PC-9 (cell line): ENCODE measurements at regions of chr1 and their contacts with region 1.

Region 1: GRCh38 chr1:61925591-61926359 is 183.5 kb downstream of the PATJ start:
- DNase-seq: no peak
- H3K4me3 ChIP-seq: no peak overlapping the region
- H3K27ac ChIP-seq: no peak overlapping the region
- H3K4me1 ChIP-seq: no peaks in the 10 kb centered on the region
- H3K27me3 ChIP-seq: no peaks in the 10 kb centered on the region
- CTCF ChIP-seq: no peak

Region 2: DNA sequence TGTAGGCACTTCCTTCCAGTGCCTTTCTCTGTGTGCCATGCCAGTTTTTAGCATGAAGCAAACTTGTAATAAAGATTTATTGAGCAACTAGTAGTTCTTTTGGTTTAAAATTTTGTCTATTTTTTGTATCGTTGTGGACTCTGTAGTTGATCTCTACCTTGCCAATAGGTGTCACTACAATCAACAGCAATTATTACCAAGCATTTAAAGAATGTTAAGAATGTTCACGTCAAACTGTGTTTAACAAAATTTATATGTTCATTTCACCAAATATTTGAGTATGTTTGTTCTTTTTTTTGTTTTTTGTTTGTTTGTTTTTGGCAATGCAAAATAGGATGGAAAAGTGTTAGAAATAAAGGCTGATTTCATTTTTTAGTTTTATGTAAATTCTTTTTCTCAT is 24.6 kb after region 1 on chr1:
- CTCF ChIA-PET with region 1: interaction called, 11 read pairs
- POLR2A ChIA-PET with region 1: no interaction called
- intact Hi-C with region 1: no loop called
- DNase-seq: peak in 1 of 2 experiments; percentile 61
- H3K4me3 ChIP-seq: no peak overlapping the region
- H3K27ac ChIP-seq: no peak overlapping the region
- H3K4me1 ChIP-seq: no peaks in the 10 kb centered on the region
- H3K27me3 ChIP-seq: no peaks in the 10 kb centered on the region
- CTCF ChIP-seq: peak; percentile 55